Sciatic nerve (tissue), 2 donors: ENCODE measurements at regions of chr6 and their contacts with region 1.

Region 1: DNA sequence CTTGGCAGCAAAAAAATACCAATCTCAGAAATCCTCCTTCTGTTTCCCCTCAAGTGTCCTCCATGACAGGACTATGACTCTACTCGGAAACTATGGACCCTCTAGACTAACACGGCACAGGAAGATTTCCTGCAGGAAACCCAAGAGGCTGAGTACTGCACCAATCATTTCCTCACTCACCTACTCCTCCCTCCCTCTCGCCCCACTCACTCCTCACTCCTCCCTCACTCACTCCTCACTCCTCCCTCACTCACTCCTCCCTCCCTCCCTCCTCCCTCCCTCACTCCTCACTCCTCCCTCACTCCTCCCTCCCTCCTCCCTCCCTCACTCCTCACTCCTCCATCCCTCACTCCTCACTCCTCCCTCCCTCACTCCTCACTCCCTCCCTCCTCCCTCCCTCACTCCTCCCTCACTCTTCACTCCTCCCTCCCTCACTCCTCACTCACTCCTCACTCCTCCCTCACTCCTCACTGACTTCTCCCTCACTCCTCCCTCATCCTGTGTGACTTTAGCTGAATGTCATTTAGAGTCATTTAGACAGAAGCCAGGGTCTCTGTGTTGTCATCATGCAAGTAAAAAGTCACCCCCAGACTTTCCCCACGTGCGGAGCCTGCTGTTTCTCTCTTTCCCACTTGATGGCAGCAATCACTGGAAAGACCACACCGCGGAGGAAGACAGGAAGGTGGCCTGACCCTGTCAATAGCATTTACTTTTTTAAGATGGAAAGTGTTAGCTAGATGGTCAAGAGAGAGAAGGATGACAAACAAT is 226.8 kb upstream of the PDE10A start:
- DNase-seq: no peak
- ATAC-seq: peak; percentile 60

Region 2: DNA sequence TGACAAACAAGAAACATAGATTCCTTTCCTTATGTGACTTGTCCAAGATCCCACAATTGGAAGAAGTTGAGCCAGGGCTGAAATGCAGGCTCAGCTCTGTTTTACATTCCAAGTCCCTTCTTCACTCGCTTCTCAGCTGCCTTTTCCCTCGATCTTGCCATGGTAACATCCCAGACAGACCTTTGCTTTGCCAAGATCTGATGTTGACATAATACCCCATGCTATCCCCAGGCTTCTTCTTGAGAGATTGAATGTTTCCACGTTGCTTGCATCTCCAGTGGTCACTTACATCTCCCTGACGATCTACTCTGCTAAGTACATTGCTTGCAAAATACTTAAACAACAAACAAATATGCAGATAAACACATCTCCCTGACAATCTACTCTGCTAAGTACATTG is 214.3 kb after region 1 on chr6:
- intact Hi-C with region 1: loop called (anchors 5 kb)
- DNase-seq: no peak
- ATAC-seq: no peak